GM12878 (cell line): ENCODE measurements at regions of chr20 and their contacts with region 1.

Region 1: DNA sequence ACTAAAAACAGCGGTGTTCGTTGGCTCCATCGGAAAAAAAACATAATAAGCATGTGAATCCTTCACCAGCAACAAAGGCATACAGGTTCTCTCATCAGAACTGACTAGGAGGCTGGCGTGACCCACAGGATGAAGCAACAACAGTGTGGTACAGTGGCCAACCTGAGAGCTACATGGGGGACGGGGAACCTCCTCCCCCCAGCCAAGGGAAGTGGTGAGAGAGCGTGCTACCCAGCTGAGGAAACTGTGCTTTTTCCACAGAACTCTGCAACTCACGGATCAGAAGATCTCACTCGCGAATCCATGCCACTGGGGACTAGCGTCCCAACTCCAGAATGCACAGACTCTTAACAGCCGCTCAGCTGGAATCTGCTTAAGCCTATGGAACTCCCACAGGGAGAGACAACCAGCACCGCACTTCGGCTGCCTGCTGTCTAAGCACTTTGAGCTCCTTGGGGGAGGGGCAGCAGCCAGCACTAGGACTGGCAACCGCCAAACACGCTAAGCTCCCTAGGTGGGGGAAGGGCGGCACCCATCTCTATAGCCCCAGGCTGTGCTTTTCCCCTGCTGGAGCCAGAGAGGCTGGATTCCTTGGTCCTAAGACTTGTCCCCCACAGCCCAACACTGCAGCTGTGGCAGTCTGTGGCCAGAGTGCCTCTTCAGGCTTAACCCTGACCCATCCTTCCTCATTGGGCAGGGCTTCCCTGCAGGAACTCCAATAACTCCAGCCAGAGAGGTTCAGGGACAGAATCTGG is 538.3 kb upstream of the BTBD3 start:
- DNase-seq: no peak
- ATAC-seq: peak; percentile 31
- H3K4me3 ChIP-seq: no peak overlapping the region
- H3K27ac ChIP-seq: no peak overlapping the region
- H3K4me1 ChIP-seq: peaks cover 9% of the 10 kb centered on the region
- H3K27me3 ChIP-seq: no peaks in the 10 kb centered on the region
- CTCF ChIP-seq: no peak
- EP300 ChIP-seq: no peak
- POLR2A ChIP-seq: no peak
- RAD21 ChIP-seq: no peak

Region 2: GRCh38 chr20:11302436-11302835 is 77.0 kb before region 1 on chr20:
- CTCF ChIA-PET with region 1: no interaction called
- POLR2A ChIA-PET with region 1: no interaction called
- RAD21 ChIA-PET with region 1: no interaction called
- SMC1A ChIA-PET with region 1: interaction called, 4 read pairs
- in situ Hi-C with region 1: no loop called
- intact Hi-C with region 1: loop called (anchors 5 kb)
- DNase-seq: no peak
- ATAC-seq: peak; percentile 19; the same call in 1 of the 3 replicates
- H3K4me3 ChIP-seq: no peak overlapping the region
- H3K27ac ChIP-seq: no peak overlapping the region
- H3K4me1 ChIP-seq: no peaks in the 10 kb centered on the region
- H3K27me3 ChIP-seq: no peaks in the 10 kb centered on the region
- CTCF ChIP-seq: no peak
- EP300 ChIP-seq: no peak
- POLR2A ChIP-seq: no peak
- RAD21 ChIP-seq: no peak

Region 3: GRCh38 chr20:11391591-11391990 is 12.2 kb after region 1 on chr20:
- CTCF ChIA-PET with region 1: interaction called, 4 read pairs
- POLR2A ChIA-PET with region 1: interaction called, 8 read pairs
- RAD21 ChIA-PET with region 1: interaction called, 3 read pairs
- SMC1A ChIA-PET with region 1: interaction called, 15 read pairs
- in situ Hi-C with region 1: no loop called
- intact Hi-C with region 1: no loop called
- DNase-seq: no peak
- ATAC-seq: peak; percentile 30; the same call in 2 of the 3 replicates
- H3K4me3 ChIP-seq: no peak overlapping the region
- H3K27ac ChIP-seq: no peak overlapping the region
- H3K4me1 ChIP-seq: no peaks in the 10 kb centered on the region
- H3K27me3 ChIP-seq: no peaks in the 10 kb centered on the region
- CTCF ChIP-seq: no peak
- EP300 ChIP-seq: no peak
- POLR2A ChIP-seq: no peak
- RAD21 ChIP-seq: no peak

Region 4: DNA sequence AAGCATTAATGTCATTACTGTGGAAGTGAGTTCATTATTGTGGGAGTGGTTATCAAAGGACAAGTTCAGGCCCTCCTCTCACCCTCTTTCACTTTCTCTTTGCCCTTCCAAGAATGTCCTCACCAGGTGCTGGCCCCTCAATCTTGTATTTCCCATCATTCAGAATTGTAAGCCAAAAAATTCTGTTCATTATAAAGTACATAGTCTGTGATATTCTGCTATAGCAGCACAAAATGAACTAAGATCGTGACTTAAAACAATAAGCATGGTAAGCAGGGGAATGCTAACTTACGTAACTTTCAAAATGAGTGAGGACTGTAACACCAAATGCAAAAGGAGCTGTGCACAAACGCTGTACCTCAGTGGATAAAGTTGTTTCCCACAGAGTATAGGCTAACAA is 22.6 kb after region 1 on chr20:
- CTCF ChIA-PET with region 1: interaction called, 3 read pairs
- POLR2A ChIA-PET with region 1: interaction called, 8 read pairs
- RAD21 ChIA-PET with region 1: interaction called, 4 read pairs
- SMC1A ChIA-PET with region 1: interaction called, 4 read pairs
- in situ Hi-C with region 1: no loop called
- intact Hi-C with region 1: loop called (anchors 2 kb)
- DNase-seq: peak; percentile 27
- ATAC-seq: peak; percentile 93
- H3K4me3 ChIP-seq: peak overlapping the region; percentile 28; the same call in 1 of the 2 replicates
- H3K27ac ChIP-seq: no peak overlapping the region
- H3K4me1 ChIP-seq: no peaks in the 10 kb centered on the region
- H3K27me3 ChIP-seq: no peaks in the 10 kb centered on the region
- CTCF ChIP-seq: no peak
- EP300 ChIP-seq: no peak
- POLR2A ChIP-seq: no peak
- RAD21 ChIP-seq: no peak

Region 5: GRCh38 chr20:11454966-11455799 is 75.7 kb after region 1 on chr20:
- CTCF ChIA-PET with region 1: no interaction called
- POLR2A ChIA-PET with region 1: no interaction called
- RAD21 ChIA-PET with region 1: interaction called, 6 read pairs
- SMC1A ChIA-PET with region 1: interaction called, 6 read pairs
- in situ Hi-C with region 1: no loop called
- intact Hi-C with region 1: loop called (anchors 1 kb)
- DNase-seq: no peak
- ATAC-seq: peak; percentile 66
- H3K4me3 ChIP-seq: no peak overlapping the region
- H3K27ac ChIP-seq: no peak overlapping the region
- H3K4me1 ChIP-seq: no peaks in the 10 kb centered on the region
- H3K27me3 ChIP-seq: no peaks in the 10 kb centered on the region
- CTCF ChIP-seq: no peak
- EP300 ChIP-seq: peak in 1 of 2 experiments; percentile 62; a peak in 1 of 4 replicates
- POLR2A ChIP-seq: no peak
- RAD21 ChIP-seq: no peak